ENCODE measurements at regions of chr15 and their contacts with region 1.

Region 1: GRCh38 chr15:67863442-67863987 is 23.7 kb upstream of the RNU6-1 start:
- DNase-seq: peak; percentile 90
- H3K4me3 ChIP-seq: peak overlapping the region; percentile 40 to 50
- H3K27ac ChIP-seq: no peak overlapping the region
- H3K4me1 ChIP-seq: peaks cover 0 to 2% of the 10 kb centered on the region in 2 experiments; a peak in 1 of 4 replicates
- H3K27me3 ChIP-seq: no peaks in the 10 kb centered on the region
- CTCF ChIP-seq: peak; percentile 87
- EP300 ChIP-seq: no peak
- RAD21 ChIP-seq: peak; percentile 92

Region 2: GRCh38 chr15:67845974-67846373 is 17.5 kb before region 1 on chr15:
- CTCF ChIA-PET with region 1: interaction called, 15 read pairs
- POLR2A ChIA-PET with region 1: no interaction called
- DNase-seq: no peak
- H3K4me3 ChIP-seq: no peak overlapping the region
- H3K27ac ChIP-seq: no peak overlapping the region
- H3K4me1 ChIP-seq: peaks cover 0 to 9% of the 10 kb centered on the region in 2 experiments; a peak in 1 of 4 replicates
- H3K27me3 ChIP-seq: no peaks in the 10 kb centered on the region
- CTCF ChIP-seq: no peak
- EP300 ChIP-seq: no peak
- RAD21 ChIP-seq: no peak

Region 3: DNA sequence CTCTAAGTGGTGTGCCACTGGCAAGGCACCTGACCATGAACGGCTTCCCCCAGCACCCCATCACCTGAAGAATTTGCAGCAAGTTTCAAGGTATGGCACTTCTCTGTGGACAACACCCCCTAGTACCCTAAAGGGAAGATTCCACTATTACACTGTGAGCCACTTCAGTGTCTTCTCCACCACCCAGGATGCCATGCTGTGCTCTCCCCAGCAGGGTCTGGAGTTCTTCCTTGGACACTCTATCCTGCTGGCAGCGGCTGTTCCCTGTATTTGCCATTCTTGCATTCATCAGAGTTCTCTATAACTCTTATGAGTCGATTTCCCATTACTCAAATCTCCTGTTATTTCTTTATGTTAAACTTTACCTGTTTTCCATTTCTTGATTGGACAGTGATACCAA is 10.3 kb after region 1 on chr15:
- CTCF ChIA-PET with region 1: interaction called, 34 read pairs
- POLR2A ChIA-PET with region 1: no interaction called
- DNase-seq: no peak
- H3K4me3 ChIP-seq: no peak overlapping the region
- H3K27ac ChIP-seq: no peak overlapping the region
- H3K4me1 ChIP-seq: no peaks in the 10 kb centered on the region
- H3K27me3 ChIP-seq: no peaks in the 10 kb centered on the region
- CTCF ChIP-seq: no peak
- EP300 ChIP-seq: no peak
- RAD21 ChIP-seq: no peak

Region 4: GRCh38 chr15:68114356-68114755 is 250.8 kb after region 1 on chr15:
- CTCF ChIA-PET with region 1: interaction called, 13 read pairs
- POLR2A ChIA-PET with region 1: no interaction called
- DNase-seq: no peak
- H3K4me3 ChIP-seq: peak overlapping the region; percentile 38 to 56; a peak in 3 of 4 replicates
- H3K27ac ChIP-seq: peak overlapping the region; percentile 44 to 54; a peak in 3 of 4 replicates
- H3K4me1 ChIP-seq: peaks cover 9 to 11% of the 10 kb centered on the region in 2 experiments; a peak in 3 of 4 replicates
- H3K27me3 ChIP-seq: no peaks in the 10 kb centered on the region
- CTCF ChIP-seq: no peak
- EP300 ChIP-seq: no peak
- RAD21 ChIP-seq: no peak

Region 5: GRCh38 chr15:68154923-68155559 is 291.5 kb after region 1 on chr15:
- CTCF ChIA-PET with region 1: interaction called, 73 read pairs
- POLR2A ChIA-PET with region 1: no interaction called
- DNase-seq: peak; percentile 39
- H3K4me3 ChIP-seq: no peak overlapping the region; a peak in 1 of 4 replicates
- H3K27ac ChIP-seq: no peak overlapping the region
- H3K4me1 ChIP-seq: peaks cover 0 to 2% of the 10 kb centered on the region in 2 experiments; a peak in 2 of 4 replicates
- H3K27me3 ChIP-seq: no peaks in the 10 kb centered on the region
- CTCF ChIP-seq: peak; percentile 86
- EP300 ChIP-seq: no peak
- RAD21 ChIP-seq: peak; percentile 90

Region 6: DNA sequence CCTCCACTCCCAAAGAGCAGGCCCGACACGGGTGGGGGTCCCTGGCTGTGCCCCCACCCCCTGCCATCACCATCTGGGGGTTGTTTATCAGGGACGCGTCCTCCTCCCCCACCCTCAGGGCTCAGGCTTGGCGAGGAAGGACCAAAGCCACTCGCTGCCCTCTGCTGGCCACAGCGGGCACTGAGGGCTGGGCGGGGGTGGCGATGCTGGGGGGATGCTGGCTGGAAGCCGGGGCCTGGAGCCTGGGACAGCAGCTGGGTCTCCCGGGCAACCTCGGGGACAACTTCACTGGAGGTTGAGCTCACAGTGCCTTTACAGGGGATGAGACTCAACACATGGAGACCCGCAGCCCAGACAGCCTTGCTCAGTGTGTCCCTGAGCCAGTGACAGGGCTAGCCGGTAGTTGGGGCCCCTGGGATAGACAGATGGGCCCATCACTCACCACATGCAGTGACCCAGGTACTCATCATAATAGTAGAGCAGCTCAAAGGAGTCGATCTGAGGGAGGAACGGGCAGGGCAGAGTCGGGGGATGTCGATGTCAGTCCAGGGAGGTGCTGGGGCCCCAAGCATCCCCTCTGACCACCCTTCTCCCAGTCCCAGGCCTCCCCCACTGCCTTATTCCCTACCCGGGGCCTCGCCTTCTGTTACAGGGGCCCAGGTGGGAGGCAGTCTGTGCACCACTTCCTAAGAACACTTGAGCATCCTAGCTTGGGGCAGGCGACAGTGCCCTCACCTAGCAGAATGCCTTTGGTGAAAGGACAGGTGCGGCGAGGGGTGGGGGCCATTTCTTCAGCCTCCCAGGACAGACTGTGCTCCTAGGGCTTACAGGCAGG is 347.5 kb after region 1 on chr15:
- CTCF ChIA-PET with region 1: interaction called, 37 read pairs
- POLR2A ChIA-PET with region 1: no interaction called
- DNase-seq: peak; percentile 94
- H3K4me3 ChIP-seq: peak overlapping the region in 1 of 2 experiments; percentile 23; a peak in 2 of 4 replicates
- H3K27ac ChIP-seq: peak overlapping the region in 1 of 2 experiments; percentile 67; a peak in 1 of 4 replicates
- H3K4me1 ChIP-seq: peaks cover 0 to 16% of the 10 kb centered on the region in 2 experiments; a peak in 1 of 4 replicates
- H3K27me3 ChIP-seq: no peaks in the 10 kb centered on the region
- CTCF ChIP-seq: peak; percentile 78
- EP300 ChIP-seq: no peak
- RAD21 ChIP-seq: peak; percentile 77